B cell (primary cell): ENCODE measurements at regions of chr17 and their contacts with region 1.

Region 1: DNA sequence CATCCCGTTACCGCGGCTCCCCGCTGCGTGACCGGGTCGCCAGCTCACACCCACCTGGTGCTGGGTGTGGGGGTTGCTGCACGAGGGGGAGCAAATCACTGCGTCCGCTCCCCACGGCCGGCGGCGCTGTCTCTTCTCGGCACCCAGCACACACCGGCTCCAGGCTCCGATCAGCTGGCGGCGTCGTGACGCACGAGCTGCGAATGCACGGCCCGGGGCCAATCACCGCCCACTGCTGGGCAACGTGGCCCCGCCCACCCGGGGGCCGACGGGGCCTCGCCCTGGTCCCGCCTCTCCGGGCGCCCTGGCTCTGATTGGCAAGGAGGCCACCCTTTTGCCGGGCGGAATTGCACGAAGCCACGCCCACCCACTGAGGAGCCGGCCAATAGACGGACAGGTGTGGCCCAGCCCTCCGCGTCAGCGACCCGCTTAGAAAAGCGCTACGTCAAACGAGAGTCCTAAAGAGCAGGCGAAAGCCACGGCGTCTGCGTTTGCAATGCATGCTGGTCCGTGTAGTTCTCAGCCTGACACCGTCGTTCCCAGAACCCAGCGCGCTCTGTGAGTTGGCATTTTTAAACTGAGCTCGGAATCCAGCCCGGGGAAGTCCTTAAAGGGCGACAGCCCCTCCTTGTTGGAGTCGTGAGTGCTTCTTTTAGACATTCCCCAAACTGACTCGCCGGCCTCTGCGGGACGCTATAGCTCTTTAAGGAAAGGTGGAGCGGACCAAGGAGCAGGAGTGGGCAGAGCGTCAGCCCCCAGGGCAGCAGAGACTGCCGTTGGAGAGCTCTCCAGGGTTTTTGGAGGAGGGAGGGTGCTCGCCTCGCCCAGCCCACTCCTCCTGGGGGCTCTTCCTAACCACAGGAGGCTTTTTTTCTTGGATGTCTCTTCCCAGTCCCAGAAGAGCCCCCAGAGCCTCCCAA is 6.2 kb upstream of the TLCD2 start:
- DNase-seq: peak; percentile 100
- ATAC-seq: peak; percentile 88
- H3K4me3 ChIP-seq: peak overlapping the region; percentile 63 to 88 (median 84)
- H3K4me3 Mint-ChIP-seq: peak overlapping the region; percentile 93
- H3K27ac ChIP-seq: peak overlapping the region; percentile 67 to 75
- H3K27ac Mint-ChIP-seq: peak overlapping the region; percentile 89
- H3K4me1 ChIP-seq: peaks cover 26 to 39% of the 10 kb centered on the region in 2 donors
- H3K4me1 Mint-ChIP-seq: peaks cover 32% of the 10 kb centered on the region
- H3K27me3 ChIP-seq: peaks cover 0 to 28% (median 8%) of the 10 kb centered on the region in 4 experiments
- H3K27me3 Mint-ChIP-seq: peaks cover 28% of the 10 kb centered on the region
- CTCF ChIP-seq: no peak

Region 2: GRCh38 chr17:1635675-1636465 is 80.5 kb before region 1 on chr17:
- CTCF ChIA-PET with region 1: no interaction called
- POLR2A ChIA-PET with region 1: no interaction called
- intact Hi-C with region 1: no loop called
- DNase-seq: no peak
- ATAC-seq: no peak
- H3K4me3 ChIP-seq: no peak overlapping the region
- H3K4me3 Mint-ChIP-seq: no peak overlapping the region
- H3K27ac ChIP-seq: no peak overlapping the region
- H3K27ac Mint-ChIP-seq: peak overlapping the region; percentile 27
- H3K4me1 ChIP-seq: peaks cover 10% of the 10 kb centered on the region in 2 donors
- H3K4me1 Mint-ChIP-seq: peaks cover 11% of the 10 kb centered on the region
- H3K27me3 ChIP-seq: no peaks in the 10 kb centered on the region
- H3K27me3 Mint-ChIP-seq: no peaks in the 10 kb centered on the region
- CTCF ChIP-seq: no peak

Region 3: DNA sequence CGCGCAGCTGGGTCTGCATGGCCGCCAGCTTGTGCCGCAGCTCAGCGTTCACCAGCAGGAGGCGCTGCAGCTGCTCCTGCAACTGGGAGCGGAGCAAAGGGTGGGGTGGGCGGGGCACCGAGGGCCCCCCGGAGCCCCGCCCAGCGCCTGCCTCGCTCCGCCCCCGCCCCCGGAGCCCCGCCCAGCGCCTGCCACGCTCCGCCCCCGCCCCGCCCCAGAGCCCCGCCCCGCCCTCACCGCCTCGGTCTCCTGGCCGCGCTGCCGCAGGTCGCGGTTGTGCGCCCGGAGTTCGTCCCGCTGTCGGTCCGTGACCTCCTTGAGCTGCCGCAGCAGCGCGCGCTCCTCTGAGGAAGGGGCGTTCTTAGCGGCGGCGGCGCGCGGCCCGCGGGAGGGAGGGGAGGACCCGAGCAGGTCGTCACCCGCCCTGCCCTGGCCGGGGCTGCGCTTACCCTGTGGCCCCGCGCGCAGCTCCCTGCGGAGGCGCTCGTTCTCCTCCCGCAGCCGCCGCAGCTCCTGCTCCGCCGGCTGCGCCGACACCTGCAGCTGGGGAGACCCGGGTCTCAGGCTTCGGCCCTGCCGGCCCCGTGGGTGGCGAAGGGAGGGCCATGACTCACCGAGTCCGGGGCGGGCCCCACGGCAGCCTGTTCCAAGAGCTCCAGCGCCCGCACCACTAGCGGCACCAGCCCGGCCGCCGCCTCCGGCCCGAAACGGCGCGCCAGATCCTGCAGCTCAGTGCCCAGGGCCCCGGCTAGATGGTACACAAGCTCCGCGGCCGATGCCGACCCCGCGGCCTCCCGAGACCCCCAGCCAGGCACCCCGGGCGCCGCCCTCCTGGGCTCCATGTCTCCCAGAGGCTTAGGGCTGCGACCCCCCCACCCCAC is 67.1 kb before region 1 on chr17:
- CTCF ChIA-PET with region 1: interaction called, 12 read pairs
- POLR2A ChIA-PET with region 1: interaction called, 3 read pairs
- intact Hi-C with region 1: loop called (anchors 1 kb)
- DNase-seq: peak; percentile 96
- ATAC-seq: peak; percentile 72
- H3K4me3 ChIP-seq: peak overlapping the region in 4 of 5 experiments; percentile 35 to 75 (median 60)
- H3K4me3 Mint-ChIP-seq: peak overlapping the region; percentile 79
- H3K27ac ChIP-seq: peak overlapping the region in 1 of 2 donors; percentile 28
- H3K27ac Mint-ChIP-seq: peak overlapping the region; percentile 75
- H3K4me1 ChIP-seq: peaks cover 26 to 36% of the 10 kb centered on the region in 2 donors
- H3K4me1 Mint-ChIP-seq: peaks cover 30% of the 10 kb centered on the region
- H3K27me3 ChIP-seq: no peaks in the 10 kb centered on the region
- H3K27me3 Mint-ChIP-seq: no peaks in the 10 kb centered on the region
- CTCF ChIP-seq: peak; percentile 79

Region 4: DNA sequence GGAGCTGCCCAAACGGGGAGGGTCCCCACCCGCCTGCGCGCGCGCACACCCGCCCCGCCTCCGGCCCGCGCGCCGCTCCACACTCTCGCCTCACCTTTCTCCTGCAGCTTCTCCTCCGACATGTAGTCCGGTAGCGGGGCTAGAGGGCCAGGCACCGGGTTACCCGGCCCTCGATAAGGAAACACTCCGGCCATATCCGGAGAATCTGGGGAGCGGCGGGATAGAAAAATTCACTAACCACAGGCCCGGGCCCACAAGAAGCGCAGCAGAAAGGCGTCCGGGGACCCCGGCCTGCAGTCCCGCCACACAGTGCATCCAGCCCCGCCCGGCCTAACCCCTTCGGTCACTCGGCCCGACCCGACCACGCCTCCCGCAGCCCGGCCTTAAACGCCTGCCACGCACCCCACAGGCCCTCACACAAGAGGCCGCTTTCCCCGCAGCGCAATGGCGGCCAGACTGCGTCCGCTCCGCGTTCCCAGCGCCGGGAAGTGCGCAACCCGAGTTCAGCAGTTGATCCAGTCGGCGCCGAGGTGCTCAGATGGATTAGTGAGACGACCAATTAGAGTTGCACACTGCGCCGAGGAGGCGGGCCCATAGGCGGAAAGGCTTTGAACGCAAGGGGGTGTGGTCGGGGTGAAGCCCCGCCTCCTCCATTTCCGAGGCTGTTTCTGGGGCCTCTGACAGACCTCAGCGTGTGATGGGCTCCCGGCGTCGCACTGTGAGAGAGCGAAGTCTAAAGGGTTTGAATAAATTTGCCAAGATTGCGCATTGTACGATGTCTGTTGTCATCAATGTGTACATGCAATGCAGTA is 31.8 kb before region 1 on chr17 and contains the start of gene PRPF8:
- CTCF ChIA-PET with region 1: interaction called, 4 read pairs
- POLR2A ChIA-PET with region 1: interaction called, 6 read pairs
- intact Hi-C with region 1: loop called (anchors 1 kb)
- DNase-seq: peak; percentile 99
- ATAC-seq: peak; percentile 99
- H3K4me3 ChIP-seq: peak within 1 kb of the TSS; percentile 88 to 97 (median 92)
- H3K4me3 Mint-ChIP-seq: peak within 1 kb of the TSS; percentile 100
- H3K27ac ChIP-seq: peak within 1 kb of the TSS; percentile 90 to 92
- H3K27ac Mint-ChIP-seq: peak within 1 kb of the TSS; percentile 100
- H3K4me1 ChIP-seq: peaks cover 17 to 28% of the 10 kb centered on the region in 2 donors
- H3K4me1 Mint-ChIP-seq: peaks cover 37% of the 10 kb centered on the region
- H3K27me3 ChIP-seq: no peaks in the 10 kb centered on the region
- H3K27me3 Mint-ChIP-seq: no peaks in the 10 kb centered on the region
- CTCF ChIP-seq: no peak
- total RNA-seq, gene PRPF8: 418 and 423 TPM in 2 replicates

Region 5: DNA sequence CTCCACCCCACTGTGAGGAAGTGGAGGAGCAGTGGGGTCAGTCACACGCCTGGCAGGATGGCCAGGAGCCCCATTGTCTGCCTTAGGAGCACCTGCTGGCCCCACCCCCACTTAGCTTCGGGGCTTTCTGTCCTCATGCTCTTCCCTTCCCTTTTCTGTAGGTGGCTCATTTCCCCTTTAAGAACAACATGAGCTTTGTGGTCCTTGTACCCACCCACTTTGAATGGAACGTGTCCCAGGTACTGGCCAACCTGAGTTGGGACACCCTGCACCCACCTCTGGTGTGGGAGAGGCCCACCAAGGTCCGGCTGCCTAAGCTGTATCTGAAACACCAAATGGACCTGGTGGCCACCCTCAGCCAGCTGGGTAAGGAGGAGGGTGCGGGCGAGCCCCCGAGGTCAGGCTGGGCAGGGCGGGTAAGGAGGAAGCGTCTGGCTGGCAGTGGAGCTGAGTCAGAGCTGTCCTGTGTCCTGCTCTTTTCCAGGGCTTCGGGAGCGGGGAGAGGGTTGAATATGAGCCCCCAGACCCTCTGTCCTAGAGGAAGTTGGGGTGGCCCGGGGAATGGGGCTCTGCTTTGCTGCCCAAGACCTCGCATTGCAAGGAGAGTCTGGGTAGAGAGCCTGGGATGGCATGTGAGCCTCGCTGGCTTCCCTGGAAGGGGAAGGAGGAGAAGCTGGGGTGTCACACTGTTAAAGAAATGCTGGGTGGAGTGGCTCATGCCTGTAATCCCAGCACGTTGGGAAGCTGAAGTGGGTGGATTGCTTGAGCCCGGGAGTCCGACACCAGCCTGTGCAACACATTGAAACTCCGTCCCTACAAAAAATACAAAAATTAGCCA is 36.3 kb after region 1 on chr17:
- CTCF ChIA-PET with region 1: interaction called, 39 read pairs
- POLR2A ChIA-PET with region 1: interaction called, 8 read pairs
- intact Hi-C with region 1: no loop called
- DNase-seq: peak; percentile 75
- ATAC-seq: peak; percentile 82
- H3K4me3 ChIP-seq: peak overlapping the region in 2 of 5 experiments; percentile 17 to 21
- H3K4me3 Mint-ChIP-seq: peak overlapping the region; percentile 67
- H3K27ac ChIP-seq: peak overlapping the region in 1 of 2 donors; percentile 6
- H3K27ac Mint-ChIP-seq: peak overlapping the region; percentile 82
- H3K4me1 ChIP-seq: peaks cover 10 to 15% of the 10 kb centered on the region in 2 donors
- H3K4me1 Mint-ChIP-seq: peaks cover 15% of the 10 kb centered on the region
- H3K27me3 ChIP-seq: no peaks in the 10 kb centered on the region
- H3K27me3 Mint-ChIP-seq: no peaks in the 10 kb centered on the region
- CTCF ChIP-seq: no peak

Region 6: DNA sequence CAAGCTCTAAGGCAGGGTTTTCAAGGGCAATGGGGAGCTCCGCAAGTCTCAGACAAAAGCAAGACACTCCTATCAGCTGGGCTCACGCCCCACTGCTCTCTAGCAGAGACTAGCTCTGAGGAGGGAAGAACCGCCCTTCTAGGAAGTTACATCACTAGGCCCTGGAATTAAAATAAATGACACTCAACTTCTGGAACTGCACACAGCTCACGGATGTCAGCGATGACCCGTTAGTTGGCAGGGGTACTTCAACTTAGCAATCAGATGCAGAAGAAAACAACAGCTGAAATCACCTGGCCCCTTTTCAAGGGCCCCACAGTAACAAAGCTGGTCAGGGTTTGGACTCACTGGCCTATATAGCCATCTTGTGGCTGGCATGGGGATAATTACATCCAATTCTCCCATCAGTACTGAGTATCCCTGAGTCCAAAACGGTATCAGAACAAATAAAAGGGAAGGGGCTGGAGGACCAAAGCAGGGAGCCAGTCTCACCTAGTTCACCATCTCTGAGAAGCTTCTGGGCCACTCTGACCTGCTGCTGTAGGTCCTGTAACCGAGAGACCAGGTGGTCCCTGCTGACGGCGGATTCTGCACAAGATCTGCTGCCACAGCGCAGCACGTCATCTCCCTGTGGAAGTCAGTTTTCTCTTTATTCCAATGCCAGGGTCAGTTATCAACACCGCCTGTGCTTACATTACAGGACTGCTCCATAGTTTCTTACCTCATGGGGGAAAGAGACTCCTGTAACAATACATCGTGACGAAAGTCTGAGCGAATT is 67.7 kb after region 1 on chr17:
- CTCF ChIA-PET with region 1: interaction called, 397 read pairs
- POLR2A ChIA-PET with region 1: interaction called, 59 read pairs
- intact Hi-C with region 1: loop called (anchors 1 kb)
- DNase-seq: peak; percentile 83
- ATAC-seq: peak; percentile 87
- H3K4me3 ChIP-seq: peak overlapping the region in 2 of 5 experiments; percentile 15 to 22
- H3K4me3 Mint-ChIP-seq: peak overlapping the region; percentile 80
- H3K27ac ChIP-seq: peak overlapping the region; percentile 92 to 97
- H3K27ac Mint-ChIP-seq: peak overlapping the region; percentile 98
- H3K4me1 ChIP-seq: peaks cover 27 to 30% of the 10 kb centered on the region in 2 donors
- H3K4me1 Mint-ChIP-seq: peaks cover 28% of the 10 kb centered on the region
- H3K27me3 ChIP-seq: no peaks in the 10 kb centered on the region
- H3K27me3 Mint-ChIP-seq: no peaks in the 10 kb centered on the region
- CTCF ChIP-seq: peak; percentile 73

Region 7: GRCh38 chr17:1865252-1866037 is 149.1 kb after region 1 on chr17:
- CTCF ChIA-PET with region 1: interaction called, 50 read pairs
- POLR2A ChIA-PET with region 1: interaction called, 3 read pairs
- intact Hi-C with region 1: loop called (anchors 1 kb)
- DNase-seq: peak; percentile 73
- ATAC-seq: peak; percentile 57
- H3K4me3 ChIP-seq: no peak overlapping the region
- H3K4me3 Mint-ChIP-seq: no peak overlapping the region
- H3K27ac ChIP-seq: no peak overlapping the region
- H3K27ac Mint-ChIP-seq: no peak overlapping the region
- H3K4me1 ChIP-seq: no peaks in the 10 kb centered on the region
- H3K4me1 Mint-ChIP-seq: no peaks in the 10 kb centered on the region
- H3K27me3 ChIP-seq: no peaks in the 10 kb centered on the region
- H3K27me3 Mint-ChIP-seq: no peaks in the 10 kb centered on the region
- CTCF ChIP-seq: peak; percentile 93

Region 8: DNA sequence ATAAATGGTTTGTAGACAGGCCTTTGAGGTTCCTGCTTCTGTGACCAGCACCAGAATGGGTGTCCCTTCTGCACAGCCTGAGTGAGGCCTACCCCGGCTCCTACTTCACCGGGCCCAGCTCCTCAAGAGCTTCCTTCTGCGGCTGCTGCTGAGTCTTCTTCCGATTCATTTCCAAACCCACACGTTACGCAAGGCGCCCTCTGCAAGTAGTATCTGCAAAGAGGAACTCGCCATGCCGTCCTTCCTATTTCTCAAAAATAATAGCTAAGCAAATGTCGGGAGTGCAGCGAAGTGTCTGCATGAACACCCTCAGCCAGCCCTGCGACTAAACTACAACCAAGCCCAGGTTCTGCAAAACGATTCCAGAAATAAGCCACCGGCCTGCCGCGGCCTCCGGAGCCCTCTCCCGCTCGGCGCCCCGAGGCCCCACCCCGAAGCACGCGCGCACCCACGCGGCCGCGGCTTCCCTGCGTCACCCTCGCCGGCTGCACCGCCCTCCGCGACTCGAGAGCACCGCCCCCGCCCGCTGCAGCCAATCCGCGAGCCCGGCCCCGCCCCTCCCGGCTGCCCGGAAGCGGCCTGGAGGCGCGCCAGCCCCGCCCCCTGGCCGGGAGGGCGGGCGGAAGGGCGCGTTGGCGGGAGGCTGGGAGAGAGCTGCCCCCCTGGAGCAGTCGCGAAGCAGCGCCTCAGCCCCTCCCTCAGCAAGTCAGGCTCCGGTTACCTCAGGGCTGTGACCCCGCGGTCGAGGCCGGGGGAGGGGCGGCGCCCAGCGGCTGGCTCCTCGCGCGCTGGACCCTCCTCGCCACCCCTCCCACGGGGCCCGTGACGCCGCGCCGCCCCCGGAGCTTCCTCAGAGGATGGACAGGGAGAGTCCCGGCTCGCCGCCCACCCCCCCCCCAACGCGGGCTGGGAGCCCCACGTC is 676.2 kb after region 1 on chr17:
- CTCF ChIA-PET with region 1: no interaction called
- POLR2A ChIA-PET with region 1: no interaction called
- intact Hi-C with region 1: loop called (anchors 2 kb)
- DNase-seq: peak; percentile 98
- ATAC-seq: peak; percentile 70
- H3K4me3 ChIP-seq: peak overlapping the region; percentile 35 to 98 (median 85)
- H3K4me3 Mint-ChIP-seq: peak overlapping the region; percentile 97
- H3K27ac ChIP-seq: peak overlapping the region; percentile 97 to 99
- H3K27ac Mint-ChIP-seq: peak overlapping the region; percentile 96
- H3K4me1 ChIP-seq: peaks cover 44 to 58% of the 10 kb centered on the region in 2 donors
- H3K4me1 Mint-ChIP-seq: peaks cover 58% of the 10 kb centered on the region
- H3K27me3 ChIP-seq: no peaks in the 10 kb centered on the region
- H3K27me3 Mint-ChIP-seq: no peaks in the 10 kb centered on the region
- CTCF ChIP-seq: no peak